ENCODE measurements at regions of chr4 and their contacts with region 1.

Region 1: GRCh38 chr4:99507762-99508161 is 3.1 kb upstream of the C4orf17 start:
- DNase-seq: peak; percentile 50
- H3K4me3 Mint-ChIP-seq: peak overlapping the region; percentile 12
- H3K27ac Mint-ChIP-seq: peak overlapping the region; percentile 87
- H3K4me1 Mint-ChIP-seq: peaks cover 36% of the 10 kb centered on the region
- H3K27me3 Mint-ChIP-seq: peaks cover 2% of the 10 kb centered on the region

Region 2: GRCh38 chr4:99447079-99447478 is 60.7 kb before region 1 on chr4:
- intact Hi-C with region 1: loop called (anchors 2 kb)
- DNase-seq: no peak
- H3K4me3 Mint-ChIP-seq: no peak overlapping the region
- H3K27ac Mint-ChIP-seq: no peak overlapping the region
- H3K4me1 Mint-ChIP-seq: peaks cover 15% of the 10 kb centered on the region
- H3K27me3 Mint-ChIP-seq: peaks cover 17% of the 10 kb centered on the region

Region 3: GRCh38 chr4:99808260-99808857 is 300.6 kb after region 1 on chr4:
- intact Hi-C with region 1: loop called (anchors 2 kb)
- DNase-seq: peak; percentile 63
- H3K4me3 Mint-ChIP-seq: no peak overlapping the region
- H3K27ac Mint-ChIP-seq: no peak overlapping the region
- H3K4me1 Mint-ChIP-seq: peaks cover 16% of the 10 kb centered on the region
- H3K27me3 Mint-ChIP-seq: peaks cover 11% of the 10 kb centered on the region

Region 4: DNA sequence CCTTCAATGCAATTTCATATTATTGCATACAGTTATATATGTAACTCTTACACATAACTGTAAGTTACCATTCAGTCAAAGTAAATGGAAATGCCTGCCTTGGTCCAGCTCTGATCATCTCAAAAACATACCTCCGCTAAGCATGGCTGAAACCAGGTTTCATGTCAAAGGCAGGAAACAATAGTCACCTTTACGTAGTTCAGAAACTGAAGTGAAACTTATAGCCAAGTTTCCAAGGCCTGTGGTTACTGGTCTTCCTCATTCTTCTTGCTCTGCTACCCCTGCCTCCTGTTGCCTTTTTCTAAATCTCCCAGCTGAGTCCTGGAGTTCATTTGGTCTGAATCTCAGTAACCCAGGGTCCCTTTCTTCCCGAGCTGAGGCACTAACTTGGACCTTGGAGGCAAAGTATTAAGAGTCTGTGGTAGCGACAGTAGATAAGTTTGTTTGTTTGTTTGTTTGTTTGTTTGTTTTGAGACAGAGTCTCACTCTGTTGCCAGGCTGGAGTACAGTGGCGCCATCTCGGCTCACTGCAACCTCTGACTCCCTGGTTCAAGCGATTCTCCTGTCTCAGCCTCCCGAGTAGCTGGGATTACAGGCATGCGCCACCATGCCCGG is 339.7 kb after region 1 on chr4:
- intact Hi-C with region 1: loop called (anchors 2 kb)
- DNase-seq: no peak
- H3K4me3 Mint-ChIP-seq: peak overlapping the region; percentile 59
- H3K27ac Mint-ChIP-seq: peak overlapping the region; percentile 95
- H3K4me1 Mint-ChIP-seq: peaks cover 83% of the 10 kb centered on the region
- H3K27me3 Mint-ChIP-seq: no peaks in the 10 kb centered on the region

Region 5: GRCh38 chr4:99894161-99894997 is 386.6 kb after region 1 on chr4 and contains the start of gene LAMTOR3:
- intact Hi-C with region 1: loop called (anchors 1 kb)
- DNase-seq: peak; percentile 87
- H3K4me3 Mint-ChIP-seq: peak within 1 kb of the TSS; percentile 97
- H3K27ac Mint-ChIP-seq: peak within 1 kb of the TSS; percentile 95
- H3K4me1 Mint-ChIP-seq: peaks cover 42% of the 10 kb centered on the region
- H3K27me3 Mint-ChIP-seq: no peaks in the 10 kb centered on the region
- total RNA-seq, gene LAMTOR3: 28.6 and 29.7 TPM in 2 replicates

Measured in activated T-helper 1 cell treated with anti-CD3 and anti-CD28 coated beads, Interleukin-12 subunit alpha, Interleukin-12 subunit beta, Interleukin-2, Interleukin-4 antibody, amounts not matched to agents 30 ng/mL and 10 ng/mL and 1 ng/mL, durations not matched to agents 14 hours and 24 hours and 36 hours (primary cell).